Activated B cell treated with CpG ODN at 0.5 μM for 24 hours (primary cell): ENCODE measurements at regions of chr16 and their contacts with region 1.

Region 1: GRCh38 chr16:75647492-75648264 is at the starts of genes KARS1 and TERF2IP:
- DNase-seq: peak; percentile 92
- ATAC-seq: peak; percentile 86
- H3K4me3 Mint-ChIP-seq: peak within 1 kb of the TSS; percentile 100
- H3K27ac Mint-ChIP-seq: peak within 1 kb of the TSS; percentile 98
- H3K4me1 Mint-ChIP-seq: peaks cover 65% of the 10 kb centered on the region
- H3K27me3 Mint-ChIP-seq: no peaks in the 10 kb centered on the region
- CTCF ChIP-seq: no peak
- total RNA-seq, gene KARS1: 166 and 182 TPM in 2 replicates
- total RNA-seq, gene TERF2IP: 52.6 and 52.7 TPM in 2 replicates

Region 2: DNA sequence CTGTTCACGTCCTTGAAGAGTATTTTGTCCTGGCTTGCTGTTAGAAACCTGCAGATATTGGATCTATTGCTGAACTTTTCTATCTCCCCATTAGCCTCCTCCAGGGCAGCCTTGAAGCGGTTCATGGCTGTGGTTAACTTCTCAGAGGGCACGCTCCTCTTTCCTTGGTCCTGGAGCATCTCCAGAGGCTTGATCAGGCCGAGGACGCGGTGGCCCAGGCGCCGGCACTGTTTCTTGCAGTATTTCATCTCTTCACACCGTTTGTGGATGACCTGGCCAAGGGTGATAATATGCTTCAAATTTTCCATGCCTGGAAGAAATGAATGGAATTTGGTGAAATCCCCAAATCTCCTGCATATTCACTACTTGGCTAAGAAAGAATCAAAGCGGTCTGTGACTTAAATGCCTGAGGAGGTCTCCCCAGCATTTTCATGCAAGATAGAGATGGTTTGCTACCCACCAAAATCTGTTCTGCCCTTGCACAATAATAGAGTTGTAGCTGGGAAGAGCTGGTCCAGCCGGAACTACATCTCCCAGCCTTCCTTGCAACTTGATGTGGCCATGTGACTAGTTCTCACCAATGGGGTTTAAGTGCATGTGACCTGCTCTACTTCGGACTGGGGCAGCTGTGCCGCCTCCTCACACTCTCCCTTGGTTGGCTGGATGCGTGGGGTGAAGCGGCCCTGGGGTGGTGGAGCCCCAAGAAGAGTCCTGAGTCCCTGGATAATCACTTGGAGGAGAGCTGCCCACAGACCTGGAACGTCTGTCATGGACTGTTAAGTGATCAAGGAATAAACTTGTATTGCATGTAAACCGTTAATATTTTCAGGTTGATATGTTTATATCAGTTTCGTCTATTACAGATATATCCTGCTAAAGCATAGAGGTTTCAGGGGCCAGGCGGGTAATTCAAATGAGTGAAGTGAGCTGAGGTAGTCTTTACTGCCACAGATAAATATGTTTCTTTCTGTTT is 951.9 kb before region 1 on chr16:
- CTCF ChIA-PET with region 1: no interaction called
- POLR2A ChIA-PET with region 1: no interaction called
- intact Hi-C with region 1: loop called (anchors 5 kb)
- DNase-seq: peak; percentile 44
- ATAC-seq: peak; percentile 89
- H3K4me3 Mint-ChIP-seq: peak overlapping the region; percentile 82
- H3K27ac Mint-ChIP-seq: peak overlapping the region; percentile 71
- H3K4me1 Mint-ChIP-seq: peaks cover 41% of the 10 kb centered on the region
- H3K27me3 Mint-ChIP-seq: no peaks in the 10 kb centered on the region
- CTCF ChIP-seq: no peak

Region 3: DNA sequence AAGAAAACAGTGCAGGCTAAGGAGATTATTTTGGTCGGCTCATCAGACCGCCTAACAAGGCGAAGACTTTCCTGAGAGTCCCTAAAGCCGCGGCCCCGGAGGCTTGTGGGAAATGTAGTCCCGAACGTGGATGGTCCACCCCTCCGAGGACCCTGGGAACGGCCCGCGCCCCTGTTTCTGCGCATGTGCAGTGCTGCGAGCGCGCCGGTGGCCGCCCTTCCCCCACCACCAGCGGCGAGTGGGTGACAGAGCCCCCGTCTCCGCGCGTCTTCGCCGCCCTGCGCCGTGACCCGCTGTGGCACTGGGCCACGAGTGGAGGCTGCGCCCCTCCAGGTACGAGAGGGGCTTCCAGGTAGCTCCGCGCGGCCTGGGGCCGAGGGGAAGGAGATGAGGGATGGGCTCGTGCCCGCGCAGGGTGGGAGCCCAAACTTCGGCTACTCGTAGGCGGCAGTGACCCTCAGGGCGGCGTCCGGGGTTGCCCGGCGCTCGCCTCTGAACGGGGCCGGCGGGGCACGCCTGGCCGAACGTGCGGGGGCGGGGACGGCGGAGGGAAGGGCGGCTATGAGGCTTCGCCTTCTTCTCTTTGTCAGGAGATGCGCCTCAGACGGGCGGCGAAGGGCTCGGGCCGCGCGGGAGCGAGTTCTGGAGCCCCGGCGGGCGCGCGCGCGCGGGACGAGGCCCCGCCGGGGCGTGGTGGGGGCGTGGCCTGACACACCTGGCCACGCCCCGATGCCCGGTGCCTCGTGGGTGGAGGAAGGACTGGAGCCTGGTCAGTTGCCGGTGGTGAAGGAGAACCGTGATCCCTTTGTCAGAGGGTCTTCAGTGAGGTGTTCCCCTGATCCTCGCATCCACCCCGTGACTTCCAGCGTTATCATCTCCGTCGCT is 499.1 kb before region 1 on chr16 and contains the start of gene ZFP1:
- CTCF ChIA-PET with region 1: no interaction called
- POLR2A ChIA-PET with region 1: interaction called, 3 read pairs
- intact Hi-C with region 1: loop called (anchors 1 kb)
- DNase-seq: peak; percentile 97
- ATAC-seq: peak; percentile 86
- H3K4me3 Mint-ChIP-seq: peak within 1 kb of the TSS; percentile 89
- H3K27ac Mint-ChIP-seq: peak within 1 kb of the TSS; percentile 87
- H3K4me1 Mint-ChIP-seq: peaks cover 29% of the 10 kb centered on the region
- H3K27me3 Mint-ChIP-seq: no peaks in the 10 kb centered on the region
- CTCF ChIP-seq: no peak
- total RNA-seq, gene ZFP1: 15.4 and 18.5 TPM in 2 replicates

Region 4: DNA sequence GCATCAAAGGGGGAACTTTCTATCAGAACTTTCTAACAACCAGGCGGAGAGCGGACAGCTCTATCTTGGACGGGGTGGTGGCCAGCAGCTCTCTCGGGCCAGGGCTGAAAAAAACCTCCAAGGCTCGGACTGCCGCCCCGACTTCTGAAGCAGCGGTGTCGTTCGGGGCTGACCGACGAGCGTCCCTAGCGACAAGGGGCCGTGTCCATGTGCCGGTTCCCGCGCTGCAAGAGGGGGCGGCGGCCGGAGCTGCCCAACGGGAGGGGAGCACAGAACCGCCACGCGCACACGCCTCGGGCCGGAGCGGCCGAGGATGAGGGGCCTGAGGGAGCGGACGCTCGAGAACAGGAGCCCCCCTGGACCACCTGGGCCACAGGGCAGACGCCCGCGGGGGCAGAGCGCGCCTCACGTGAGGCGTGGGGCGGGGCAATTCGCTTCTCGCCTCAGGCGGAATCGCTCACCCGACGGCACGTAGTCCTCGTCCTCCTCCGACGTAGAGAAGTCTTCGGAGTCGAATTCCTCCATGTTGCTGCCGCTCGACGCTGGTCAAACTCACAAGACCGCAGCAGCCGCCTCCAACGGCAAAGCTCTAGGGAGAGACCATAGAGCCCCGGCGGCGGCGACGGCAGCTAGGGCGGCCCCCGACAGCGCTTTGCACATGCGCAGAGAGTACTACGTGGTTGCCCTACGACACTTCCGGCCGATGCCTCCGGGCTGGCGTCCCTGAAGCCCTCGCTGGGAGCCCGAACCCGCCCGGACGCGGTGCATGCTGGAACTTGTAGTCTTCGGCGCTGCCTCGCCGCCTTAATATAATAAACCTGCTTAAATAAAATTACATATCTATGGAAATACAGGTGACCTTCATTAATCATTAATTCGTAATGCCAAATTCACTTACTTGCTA is 214.6 kb before region 1 on chr16 and contains the start of gene CFDP1:
- CTCF ChIA-PET with region 1: no interaction called
- POLR2A ChIA-PET with region 1: interaction called, 36 read pairs
- intact Hi-C with region 1: loop called (anchors 1 kb)
- DNase-seq: peak; percentile 91
- ATAC-seq: peak; percentile 86
- H3K4me3 Mint-ChIP-seq: peak within 1 kb of the TSS; percentile 91
- H3K27ac Mint-ChIP-seq: peak within 1 kb of the TSS; percentile 88
- H3K4me1 Mint-ChIP-seq: peaks cover 19% of the 10 kb centered on the region
- H3K27me3 Mint-ChIP-seq: no peaks in the 10 kb centered on the region
- CTCF ChIP-seq: no peak
- total RNA-seq, gene CFDP1: 27.7 and 32.0 TPM in 2 replicates

Region 5: DNA sequence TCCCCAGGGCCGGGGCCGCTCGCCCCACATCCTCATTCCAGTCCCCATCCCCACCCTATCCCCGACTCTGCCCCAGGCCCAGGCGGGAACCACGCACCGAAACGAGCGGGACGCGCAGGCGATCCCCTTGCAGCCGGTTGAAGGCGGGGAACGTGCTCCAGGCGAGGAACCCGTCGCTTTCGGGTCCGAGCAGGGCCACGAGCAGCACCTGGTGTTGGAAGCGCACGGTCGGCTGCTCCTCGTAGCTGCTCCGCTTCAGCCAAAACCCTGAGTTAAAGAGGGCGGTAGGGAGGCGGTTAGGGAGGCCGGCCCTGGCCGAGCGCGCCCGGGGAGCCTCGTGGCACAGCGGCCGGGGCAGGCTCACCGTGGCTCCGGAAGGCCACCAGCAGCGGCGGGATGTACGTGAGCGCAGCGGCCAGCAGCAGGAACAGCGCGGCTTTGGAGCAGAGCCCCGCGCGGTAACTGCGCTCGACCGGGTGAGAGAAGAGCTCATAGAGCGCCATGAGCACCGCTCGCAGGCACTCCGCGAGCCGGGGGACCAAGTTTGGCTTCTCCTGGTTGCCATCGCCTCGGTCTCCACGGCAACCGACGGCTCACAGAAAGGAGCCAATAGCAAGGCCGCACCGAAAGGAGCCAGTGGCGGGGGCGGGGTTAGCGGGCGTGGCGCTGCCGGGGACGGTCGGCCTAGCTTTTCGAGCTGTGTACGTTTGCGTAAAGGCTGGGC is 91.8 kb before region 1 on chr16 and contains the start of gene TMEM231:
- CTCF ChIA-PET with region 1: no interaction called
- POLR2A ChIA-PET with region 1: interaction called, 9 read pairs
- intact Hi-C with region 1: loop called (anchors 1 kb)
- DNase-seq: peak; percentile 89
- ATAC-seq: peak; percentile 94
- H3K4me3 Mint-ChIP-seq: peak within 1 kb of the TSS; percentile 93
- H3K27ac Mint-ChIP-seq: peak within 1 kb of the TSS; percentile 89
- H3K4me1 Mint-ChIP-seq: peaks cover 10% of the 10 kb centered on the region
- H3K27me3 Mint-ChIP-seq: no peaks in the 10 kb centered on the region
- CTCF ChIP-seq: no peak
- total RNA-seq, gene TMEM231: 4.0 and 4.1 TPM in 2 replicates

Region 6: DNA sequence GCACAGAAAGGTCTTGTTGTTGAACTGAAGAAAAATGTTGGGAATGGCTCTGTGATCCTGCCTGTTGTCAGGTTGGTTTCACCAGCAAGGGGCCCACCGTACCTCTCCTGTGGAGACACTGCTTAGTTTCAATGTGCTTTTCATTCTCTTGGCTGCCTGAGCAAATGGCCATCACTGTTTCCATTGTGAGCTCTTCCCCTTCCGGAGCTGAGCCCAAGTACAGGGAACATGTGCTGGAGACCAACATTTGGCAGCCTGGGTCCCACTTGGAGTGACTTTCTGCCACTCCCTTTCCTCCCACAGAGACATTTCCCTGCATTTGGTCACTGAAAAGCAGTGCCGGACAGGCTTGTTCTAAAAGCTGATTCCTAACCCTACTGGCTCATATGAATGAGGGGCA is 58.4 kb before region 1 on chr16:
- CTCF ChIA-PET with region 1: no interaction called
- POLR2A ChIA-PET with region 1: no interaction called
- intact Hi-C with region 1: no loop called
- DNase-seq: no peak
- ATAC-seq: no peak
- H3K4me3 Mint-ChIP-seq: no peak overlapping the region
- H3K27ac Mint-ChIP-seq: no peak overlapping the region
- H3K4me1 Mint-ChIP-seq: peaks cover 18% of the 10 kb centered on the region
- H3K27me3 Mint-ChIP-seq: no peaks in the 10 kb centered on the region
- CTCF ChIP-seq: no peak

Region 7: GRCh38 chr16:75622761-75623605 is 24.7 kb before region 1 on chr16 and contains the start of gene ADAT1:
- CTCF ChIA-PET with region 1: interaction called, 3 read pairs
- POLR2A ChIA-PET with region 1: interaction called, 95 read pairs
- intact Hi-C with region 1: loop called (anchors 1 kb)
- DNase-seq: peak; percentile 93
- ATAC-seq: peak; percentile 97
- H3K4me3 Mint-ChIP-seq: peak within 1 kb of the TSS; percentile 98
- H3K27ac Mint-ChIP-seq: peak within 1 kb of the TSS; percentile 95
- H3K4me1 Mint-ChIP-seq: peaks cover 22% of the 10 kb centered on the region
- H3K27me3 Mint-ChIP-seq: no peaks in the 10 kb centered on the region
- CTCF ChIP-seq: no peak
- total RNA-seq, gene ADAT1: 52.7 and 57.2 TPM in 2 replicates

Region 8: GRCh38 chr16:77211880-77212740 is 1564.4 kb after region 1 on chr16:
- CTCF ChIA-PET with region 1: no interaction called
- POLR2A ChIA-PET with region 1: no interaction called
- intact Hi-C with region 1: loop called (anchors 5 kb)
- DNase-seq: peak; percentile 63
- ATAC-seq: peak; percentile 71
- H3K4me3 Mint-ChIP-seq: peak overlapping the region; percentile 89
- H3K27ac Mint-ChIP-seq: peak overlapping the region; percentile 37
- H3K4me1 Mint-ChIP-seq: peaks cover 9% of the 10 kb centered on the region
- H3K27me3 Mint-ChIP-seq: no peaks in the 10 kb centered on the region
- CTCF ChIP-seq: no peak